Panc1 (cell line): ENCODE measurements at regions of chr4 and their contacts with region 1.

Region 1: GRCh38 chr4:155822572-155822971 is 43.5 kb downstream of the ASIC5 start:
- DNase-seq: no peak
- ATAC-seq: peak; percentile 84
- H3K4me3 ChIP-seq: no peak overlapping the region
- H3K27ac ChIP-seq: no peak overlapping the region
- H3K4me1 ChIP-seq: no peaks in the 10 kb centered on the region
- H3K27me3 ChIP-seq: no peaks in the 10 kb centered on the region
- CTCF ChIP-seq: no peak

Region 2: GRCh38 chr4:155707251-155707650 is 115.3 kb before region 1 on chr4:
- CTCF ChIA-PET with region 1: no interaction called
- POLR2A ChIA-PET with region 1: no interaction called
- in situ Hi-C with region 1: no loop called
- intact Hi-C with region 1: no loop called
- DNase-seq: no peak
- ATAC-seq: no peak
- H3K4me3 ChIP-seq: no peak overlapping the region
- H3K27ac ChIP-seq: no peak overlapping the region
- H3K4me1 ChIP-seq: no peaks in the 10 kb centered on the region
- H3K27me3 ChIP-seq: no peaks in the 10 kb centered on the region
- CTCF ChIP-seq: no peak

Region 3: GRCh38 chr4:155906554-155907247 is 84.1 kb after region 1 on chr4:
- CTCF ChIA-PET with region 1: no interaction called
- POLR2A ChIA-PET with region 1: no interaction called
- in situ Hi-C with region 1: no loop called
- intact Hi-C with region 1: loop called (anchors 10 kb)
- DNase-seq: no peak
- ATAC-seq: no peak
- H3K4me3 ChIP-seq: no peak overlapping the region
- H3K27ac ChIP-seq: no peak overlapping the region
- H3K4me1 ChIP-seq: no peaks in the 10 kb centered on the region
- H3K27me3 ChIP-seq: no peaks in the 10 kb centered on the region
- CTCF ChIP-seq: no peak